Activated T-helper 1 cell treated with anti-CD3 and anti-CD28 coated beads, Interleukin-12 subunit alpha, Interleukin-12 subunit beta, Interleukin-2, Interleukin-4 antibody, amounts not matched to agents 30 ng/mL and 10 ng/mL and 1 ng/mL, durations not matched to agents 14 hours and 24 hours and 36 hours (primary cell): ENCODE measurements at regions of chr1 and their contacts with region 1.

Region 1: DNA sequence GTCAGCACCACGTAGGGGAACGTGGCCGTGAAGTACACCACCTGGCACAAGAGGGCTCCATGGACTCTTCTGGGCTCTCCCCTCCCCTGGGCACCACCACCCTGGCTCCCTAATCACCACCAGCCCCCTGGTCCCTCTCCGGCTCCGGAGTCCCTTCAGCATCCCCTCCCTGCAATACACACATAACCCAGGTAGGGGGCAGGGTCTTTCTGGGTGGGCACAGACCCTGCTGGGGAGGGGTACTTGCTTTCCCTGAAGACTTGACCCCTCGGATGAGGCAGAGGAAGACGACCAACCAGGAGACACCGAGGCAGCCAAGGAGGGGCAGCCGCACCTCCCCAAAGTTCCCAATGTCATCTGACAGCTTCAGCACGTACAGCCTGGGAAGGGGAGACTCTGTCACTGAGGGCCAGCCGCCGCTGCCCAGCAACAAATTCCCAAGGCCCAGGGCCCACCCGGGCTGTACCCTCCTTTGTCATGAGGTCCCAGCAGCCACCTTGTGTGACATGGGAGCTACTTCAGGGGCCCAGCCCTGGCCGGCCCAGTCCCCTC is 11.3 kb downstream of the CCDC24 start:
- DNase-seq: no peak
- H3K4me3 Mint-ChIP-seq: no peak overlapping the region
- H3K27ac Mint-ChIP-seq: no peak overlapping the region
- H3K4me1 Mint-ChIP-seq: no peaks in the 10 kb centered on the region
- H3K27me3 Mint-ChIP-seq: no peaks in the 10 kb centered on the region

Region 2: DNA sequence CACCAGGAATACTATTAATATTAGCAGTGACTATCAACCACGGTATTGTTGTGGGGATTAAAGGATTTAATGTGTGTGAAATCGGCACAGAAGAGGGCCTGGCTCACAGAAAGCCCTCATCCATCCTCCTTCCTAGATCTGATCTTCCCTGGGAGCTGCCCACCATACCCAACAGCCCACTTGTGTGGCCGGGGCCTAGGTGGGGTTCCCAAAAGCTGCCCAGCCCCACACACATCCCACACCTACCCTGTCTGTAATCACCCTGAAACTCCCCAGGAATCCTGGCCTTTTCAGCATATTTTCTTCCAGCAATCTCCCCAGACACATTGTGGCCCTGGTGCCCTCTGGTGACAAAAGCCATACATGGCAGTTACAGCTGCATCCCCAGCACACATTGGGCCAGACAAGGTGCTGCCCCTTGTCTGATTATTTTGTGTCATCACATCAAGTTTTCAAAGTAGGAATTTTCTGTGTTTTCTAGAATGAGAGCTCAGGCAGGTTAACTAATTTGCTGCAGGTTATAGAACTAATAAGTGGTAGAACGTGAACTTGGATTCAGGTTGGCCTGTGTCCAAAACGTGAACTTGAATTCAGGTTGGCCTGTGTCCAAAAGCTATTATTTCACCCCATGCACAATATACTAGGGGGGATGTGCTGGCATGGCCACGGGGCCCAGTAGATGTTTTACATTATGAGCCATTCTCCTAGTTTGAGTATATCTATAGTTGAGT is 33.9 kb after region 1 on chr1:
- intact Hi-C with region 1: loop called (anchors 1 kb)
- DNase-seq: peak; percentile 55
- H3K4me3 Mint-ChIP-seq: no peak overlapping the region
- H3K27ac Mint-ChIP-seq: no peak overlapping the region
- H3K4me1 Mint-ChIP-seq: peaks cover 14% of the 10 kb centered on the region
- H3K27me3 Mint-ChIP-seq: peaks cover 10% of the 10 kb centered on the region

Region 3: DNA sequence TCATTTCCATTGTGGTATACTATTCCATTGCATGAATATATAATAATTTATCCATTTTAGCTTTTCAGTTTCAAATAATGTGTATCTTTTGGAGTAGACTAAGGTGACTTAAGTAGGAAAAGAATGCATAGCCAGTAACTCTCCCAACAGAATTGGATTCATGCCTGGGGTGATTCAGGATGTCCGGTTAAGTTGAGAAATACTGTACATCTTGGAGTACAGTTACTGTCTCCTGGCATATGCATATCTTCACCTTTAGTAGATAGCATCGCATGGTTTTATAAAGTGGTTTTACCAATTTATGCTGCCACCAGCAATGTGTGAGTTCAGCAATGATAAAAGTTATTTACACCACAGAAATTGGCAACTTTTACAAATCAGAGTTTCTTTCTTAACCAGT is 47.2 kb after region 1 on chr1:
- intact Hi-C with region 1: loop called (anchors 1 kb)
- DNase-seq: no peak
- H3K4me3 Mint-ChIP-seq: no peak overlapping the region
- H3K27ac Mint-ChIP-seq: no peak overlapping the region
- H3K4me1 Mint-ChIP-seq: peaks cover 16% of the 10 kb centered on the region
- H3K27me3 Mint-ChIP-seq: peaks cover 3% of the 10 kb centered on the region

Region 4: GRCh38 chr1:44417351-44418021 is 414.8 kb after region 1 on chr1:
- intact Hi-C with region 1: no loop called
- DNase-seq: no peak
- H3K4me3 Mint-ChIP-seq: no peak overlapping the region
- H3K27ac Mint-ChIP-seq: no peak overlapping the region
- H3K4me1 Mint-ChIP-seq: no peaks in the 10 kb centered on the region
- H3K27me3 Mint-ChIP-seq: peaks cover 64% of the 10 kb centered on the region